ENCODE measurements at regions of chr3 and their contacts with region 1.

Region 1: GRCh38 chr3:39724233-39724846 is 85.1 kb upstream of the MYRIP start:
- DNase-seq: no peak
- ATAC-seq: peak in 3 of 4 donors; percentile 58 to 68 (median 60)
- H3K4me3 ChIP-seq: no peak overlapping the region
- H3K27ac ChIP-seq: no peak overlapping the region
- H3K4me1 ChIP-seq: no peaks in the 10 kb centered on the region
- H3K27me3 ChIP-seq: no peaks in the 10 kb centered on the region
- CTCF ChIP-seq: peak in 1 of 4 donors; percentile 14

Region 2: GRCh38 chr3:39981547-39982184 is 257.3 kb after region 1 on chr3:
- intact Hi-C with region 1: loop called in 1 of 3 experiments (anchors 10 kb)
- DNase-seq: no peak
- ATAC-seq: no peak
- H3K4me3 ChIP-seq: no peak overlapping the region
- H3K27ac ChIP-seq: peak overlapping the region in 1 of 4 donors; percentile 0
- H3K4me1 ChIP-seq: peaks cover 12 to 25% (median 23%) of the 10 kb centered on the region in 3 donors
- H3K27me3 ChIP-seq: no peaks in the 10 kb centered on the region
- CTCF ChIP-seq: no peak

Region 3: GRCh38 chr3:40179016-40179415 is 454.7 kb after region 1 on chr3:
- intact Hi-C with region 1: loop called in 2 of 3 experiments (anchors 10 kb)
- DNase-seq: peak; percentile 34 to 85 (median 71)
- ATAC-seq: peak; percentile 50 to 89 (median 84)
- H3K4me3 ChIP-seq: no peak overlapping the region
- H3K27ac ChIP-seq: no peak overlapping the region
- H3K4me1 ChIP-seq: no peaks in the 10 kb centered on the region
- H3K27me3 ChIP-seq: no peaks in the 10 kb centered on the region
- CTCF ChIP-seq: peak; percentile 37 to 63 (median 42)